ENCODE measurements at regions of chr14 and their contacts with region 1.

Region 1: DNA sequence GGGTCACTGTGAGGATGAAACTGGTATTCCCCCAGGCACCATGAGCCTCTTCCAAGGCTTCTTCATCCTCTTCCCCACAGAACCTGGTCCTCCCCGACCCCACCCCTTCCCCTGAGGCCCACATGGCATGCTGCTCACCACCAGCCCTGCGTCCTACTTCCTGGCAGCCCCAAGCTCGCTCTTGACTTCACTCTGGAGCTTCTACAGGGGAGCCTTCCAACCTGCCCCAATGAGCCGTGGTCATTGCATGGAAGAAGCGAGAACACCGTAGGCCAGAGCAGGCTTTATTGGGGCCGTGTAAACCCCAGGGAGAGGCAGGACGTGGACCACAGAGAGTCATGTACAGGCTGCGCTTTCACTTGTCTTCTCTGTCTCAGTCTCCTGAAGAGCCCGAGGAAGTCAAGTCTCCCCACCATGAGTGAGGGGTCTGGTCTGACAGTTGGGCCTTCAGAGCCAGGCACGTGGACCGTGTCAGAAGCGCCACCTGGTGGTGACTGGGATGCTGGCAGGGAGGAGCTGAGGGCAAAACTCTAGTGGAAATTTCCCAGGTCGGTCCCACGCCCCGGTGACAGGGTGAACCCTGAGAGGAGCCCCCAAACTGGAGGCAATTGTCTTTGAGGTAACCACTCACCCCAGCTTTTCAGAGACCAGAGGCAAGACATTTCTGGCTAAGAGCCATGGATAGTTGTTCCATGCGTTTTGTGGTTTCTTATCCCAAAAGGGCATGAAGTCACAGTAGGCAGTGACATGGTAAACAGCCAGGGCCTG is 17.5 kb downstream of the RPS6KL1 start:
- DNase-seq: peak in 2 of 3 donors; percentile 82 to 83
- ATAC-seq: peak; percentile 53
- H3K4me3 ChIP-seq: no peak overlapping the region
- H3K4me1 ChIP-seq: peaks cover 12% of the 10 kb centered on the region
- CTCF ChIP-seq: peak; percentile 75

Region 2: GRCh38 chr14:74860906-74861733 is 44.4 kb before region 1 on chr14:
- intact Hi-C with region 1: loop called (anchors 5 kb)
- DNase-seq: peak; percentile 87 to 99 (median 94)
- ATAC-seq: peak; percentile 95
- H3K4me3 ChIP-seq: no peak overlapping the region
- H3K4me1 ChIP-seq: peaks cover 4% of the 10 kb centered on the region
- CTCF ChIP-seq: peak; percentile 76